Left ventricle myocardium superior (tissue), 1 donor: ENCODE measurements at regions of chr10 and their contacts with region 1.

Region 1: DNA sequence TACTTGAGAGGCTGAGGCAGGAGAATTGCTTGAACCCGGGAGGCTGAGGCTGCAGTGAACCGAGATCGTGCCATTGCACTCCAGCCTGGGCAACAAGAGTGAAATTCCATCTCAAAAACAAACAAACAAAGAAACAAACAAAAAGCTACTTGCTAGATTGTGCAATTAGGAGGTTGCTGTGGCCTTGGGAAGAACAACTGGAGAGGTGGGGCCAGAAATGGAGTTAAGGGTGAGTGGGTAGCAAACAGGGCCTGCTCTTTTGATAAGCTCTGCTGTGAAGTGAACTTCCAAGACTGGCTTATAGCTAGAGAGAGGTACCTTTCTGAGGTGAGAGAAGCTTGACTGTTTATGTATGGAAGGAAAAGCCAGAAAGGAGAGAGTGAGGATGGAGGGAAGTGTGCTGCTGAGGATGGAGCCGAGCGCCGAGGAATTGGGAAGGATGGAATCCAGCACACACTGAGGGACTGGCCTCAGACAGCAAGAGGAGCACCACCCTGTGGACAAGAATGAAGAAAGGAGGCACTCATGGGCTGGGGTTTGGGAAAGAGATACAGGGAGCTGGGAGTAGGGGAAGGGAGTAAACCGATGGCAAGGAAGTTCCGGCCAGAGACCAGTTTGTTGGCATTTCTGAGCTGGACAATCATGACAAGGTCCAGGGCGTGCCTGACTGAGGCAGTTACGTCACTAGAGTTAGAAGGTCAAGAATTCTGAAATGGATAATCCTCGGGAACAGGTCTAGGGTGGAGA is 7.0 kb upstream of the RPEL1 start:
- DNase-seq: peak; percentile 40
- ATAC-seq: peak; percentile 86

Region 2: DNA sequence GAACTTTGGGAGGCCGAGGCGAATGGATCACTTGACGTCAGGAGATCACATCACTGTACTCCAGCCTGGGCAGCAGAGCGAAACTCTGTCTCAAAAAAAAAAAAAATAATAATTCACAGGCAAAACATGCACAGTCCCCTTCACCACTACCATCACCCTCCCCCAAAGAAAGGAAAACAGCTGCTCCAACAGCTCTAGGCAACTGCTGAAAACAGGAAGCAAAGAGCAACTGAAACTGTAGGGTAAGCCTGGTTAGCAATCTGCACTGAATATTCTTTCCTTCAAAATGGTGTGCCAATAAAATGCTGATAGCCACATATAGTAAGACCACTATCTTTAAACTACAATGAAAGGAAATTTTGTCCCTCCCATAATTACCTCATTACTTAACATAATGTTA is 57.4 kb before region 1 on chr10:
- intact Hi-C with region 1: loop called (anchors 10 kb)
- DNase-seq: no peak
- ATAC-seq: peak; percentile 70

Region 3: DNA sequence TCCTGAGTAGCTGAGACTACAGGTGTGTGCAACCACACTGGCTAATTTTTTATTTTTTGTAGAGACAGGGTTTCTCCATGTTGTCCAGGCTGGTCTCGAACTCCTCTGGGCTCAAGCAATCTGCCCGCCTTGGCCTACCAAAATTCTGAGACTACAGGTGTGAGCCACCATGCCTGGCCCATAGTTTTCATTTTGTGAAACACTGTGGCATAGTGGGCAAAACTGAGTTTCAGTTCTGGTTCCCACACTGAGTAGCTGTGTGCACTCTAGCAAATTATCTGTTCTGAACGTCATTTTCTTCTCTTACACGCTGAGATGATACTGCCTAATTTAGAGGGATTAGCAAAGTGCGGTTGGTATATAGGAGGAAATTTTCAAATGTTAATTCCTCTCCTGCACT is 144.1 kb after region 1 on chr10:
- intact Hi-C with region 1: no loop called
- DNase-seq: no peak
- ATAC-seq: no peak